Activated T-helper 1 cell treated with anti-CD3 and anti-CD28 coated beads, Interleukin-12 subunit alpha, Interleukin-12 subunit beta, Interleukin-2, Interleukin-4 antibody, amounts not matched to agents 30 ng/mL and 10 ng/mL and 1 ng/mL, durations not matched to agents 14 hours and 24 hours and 36 hours (primary cell): ENCODE measurements at regions of chr2 and their contacts with region 1.

Region 1: DNA sequence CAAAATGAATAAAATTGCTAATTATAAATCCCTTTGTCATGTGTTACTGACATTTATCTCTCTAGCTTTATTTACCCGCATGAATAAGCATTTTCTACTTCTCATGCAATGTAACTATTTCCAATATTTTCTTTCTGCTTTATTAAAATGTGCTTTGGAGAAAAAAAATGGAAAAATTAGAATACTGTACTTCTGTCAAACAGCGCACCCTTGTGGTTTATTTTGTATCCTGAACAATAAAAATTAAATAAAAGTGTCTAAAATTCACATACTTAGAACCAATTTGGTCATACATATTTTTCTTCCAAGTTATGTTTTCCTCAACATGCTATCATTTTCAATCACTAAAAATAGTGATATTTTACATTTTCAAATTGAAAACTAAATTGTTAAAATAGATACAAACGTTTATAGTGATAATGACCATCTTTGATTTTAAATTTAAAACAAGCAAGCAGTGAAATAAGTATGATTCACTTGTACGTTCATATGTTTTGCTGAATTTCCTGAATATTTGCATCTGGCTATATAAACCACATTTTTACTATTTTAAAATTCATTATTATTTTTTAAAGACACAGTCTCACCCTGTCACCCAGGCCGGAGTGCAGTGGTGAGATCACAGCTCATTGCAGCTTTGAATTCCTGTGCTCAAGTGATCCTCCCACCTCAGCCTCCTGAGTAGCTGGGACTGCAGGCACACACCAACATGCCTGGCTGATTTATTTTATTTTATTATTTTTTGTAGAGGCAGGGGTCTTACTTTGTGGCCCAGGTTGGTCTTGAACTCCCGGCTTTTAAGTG is 95.9 kb upstream of the GRB14 start:
- DNase-seq: no peak
- H3K4me3 Mint-ChIP-seq: no peak overlapping the region
- H3K27ac Mint-ChIP-seq: no peak overlapping the region
- H3K4me1 Mint-ChIP-seq: no peaks in the 10 kb centered on the region
- H3K27me3 Mint-ChIP-seq: peaks cover 9% of the 10 kb centered on the region

Region 2: GRCh38 chr2:163171786-163172531 is 1545.2 kb before region 1 on chr2:
- intact Hi-C with region 1: loop called (anchors 10 kb)
- DNase-seq: no peak
- H3K4me3 Mint-ChIP-seq: no peak overlapping the region
- H3K27ac Mint-ChIP-seq: no peak overlapping the region
- H3K4me1 Mint-ChIP-seq: no peaks in the 10 kb centered on the region
- H3K27me3 Mint-ChIP-seq: no peaks in the 10 kb centered on the region

Region 3: DNA sequence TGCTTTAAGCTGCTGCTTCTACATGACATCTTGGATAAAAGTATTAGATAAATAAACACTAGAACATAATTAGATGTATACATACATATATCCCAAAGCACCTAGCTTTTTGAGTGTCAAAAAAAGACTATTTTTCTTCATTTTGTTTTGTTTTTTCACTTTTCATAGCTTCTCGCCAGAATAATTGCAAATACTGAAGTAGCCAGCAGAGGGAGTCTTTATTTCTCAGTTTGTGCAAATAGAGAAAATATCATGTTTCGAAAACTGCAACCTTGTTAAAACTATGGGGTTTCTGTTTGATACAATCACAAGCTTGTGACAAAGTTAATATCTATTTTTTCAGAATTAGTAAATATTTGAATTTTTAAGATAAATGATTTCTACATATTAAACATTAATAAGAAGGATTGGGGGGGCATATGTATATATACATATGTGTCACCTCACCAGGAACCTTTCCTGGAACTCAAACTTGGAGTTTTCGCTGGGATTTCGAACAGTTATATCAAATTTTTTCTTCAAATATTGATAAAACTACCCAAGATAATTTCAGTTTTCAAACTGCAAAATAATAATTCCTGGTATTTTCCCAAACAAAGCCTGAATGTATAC is 156.9 kb before region 1 on chr2:
- intact Hi-C with region 1: loop called (anchors 10 kb)
- DNase-seq: no peak
- H3K4me3 Mint-ChIP-seq: no peak overlapping the region
- H3K27ac Mint-ChIP-seq: no peak overlapping the region
- H3K4me1 Mint-ChIP-seq: no peaks in the 10 kb centered on the region
- H3K27me3 Mint-ChIP-seq: peaks cover 6% of the 10 kb centered on the region

Region 4: DNA sequence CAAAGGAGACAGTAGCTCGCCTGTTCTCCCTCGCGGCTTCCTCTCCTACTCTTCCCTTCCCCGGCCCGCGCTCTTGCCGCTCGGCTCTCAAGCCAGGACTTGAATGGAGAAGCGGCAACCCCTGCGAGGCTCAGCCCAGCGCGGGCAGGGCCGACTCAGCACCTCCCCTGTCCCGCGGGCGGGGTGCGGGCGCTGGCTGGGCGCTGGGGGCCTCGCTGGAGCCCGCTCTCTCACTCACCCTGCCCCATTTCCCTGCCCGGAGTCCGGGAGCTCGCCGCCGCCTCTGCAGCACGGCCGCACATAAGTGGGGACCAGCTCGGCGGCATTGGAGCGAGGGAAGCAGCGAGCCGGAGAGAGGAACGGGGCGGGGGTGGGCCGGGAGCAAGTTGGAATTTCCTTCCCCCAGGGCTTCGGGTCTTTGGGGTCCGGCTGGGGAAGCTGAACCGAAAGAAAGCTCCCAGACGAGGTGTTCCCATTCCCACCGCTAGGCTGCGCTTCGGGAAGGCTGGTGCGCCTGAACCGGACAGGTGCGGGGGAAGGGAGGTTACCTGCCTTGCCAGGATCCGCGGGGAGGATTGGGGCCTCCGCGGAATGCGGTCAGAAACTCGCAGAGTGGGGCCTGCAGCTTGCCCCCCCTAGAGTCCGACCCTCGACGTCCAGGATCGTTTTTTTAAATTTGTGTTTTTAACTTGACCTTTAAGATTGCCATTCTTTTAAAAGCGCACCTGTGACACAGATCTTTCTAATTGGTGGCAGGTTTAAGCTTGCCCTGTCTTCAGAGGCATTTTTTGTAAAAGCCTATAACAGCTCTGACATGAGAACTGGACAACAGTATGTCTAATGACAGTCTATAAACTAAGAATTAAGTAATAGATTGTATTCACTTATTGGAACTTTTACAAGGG is 124.8 kb after region 1 on chr2 and contains the start of gene COBLL1:
- intact Hi-C with region 1: no loop called
- DNase-seq: peak; percentile 7
- H3K4me3 Mint-ChIP-seq: peak within 1 kb of the TSS; percentile 64
- H3K27ac Mint-ChIP-seq: no peak within 1 kb of the TSS
- H3K4me1 Mint-ChIP-seq: peaks cover 7% of the 10 kb centered on the region
- H3K27me3 Mint-ChIP-seq: peaks cover 56% of the 10 kb centered on the region
- total RNA-seq, gene COBLL1: not detected in 2 replicates